Activated B cell treated with CpG ODN at 0.5 μM for 24 hours (primary cell): ENCODE measurements at regions of chr19 and their contacts with region 1.

Region 1: GRCh38 chr19:34134190-34135053 is 37.9 kb upstream of the LSM14A start:
- DNase-seq: peak; percentile 96
- ATAC-seq: peak; percentile 99
- H3K4me3 Mint-ChIP-seq: peak overlapping the region; percentile 93
- H3K27ac Mint-ChIP-seq: peak overlapping the region; percentile 91
- H3K4me1 Mint-ChIP-seq: peaks cover 5% of the 10 kb centered on the region
- H3K27me3 Mint-ChIP-seq: no peaks in the 10 kb centered on the region
- CTCF ChIP-seq: no peak

Region 2: DNA sequence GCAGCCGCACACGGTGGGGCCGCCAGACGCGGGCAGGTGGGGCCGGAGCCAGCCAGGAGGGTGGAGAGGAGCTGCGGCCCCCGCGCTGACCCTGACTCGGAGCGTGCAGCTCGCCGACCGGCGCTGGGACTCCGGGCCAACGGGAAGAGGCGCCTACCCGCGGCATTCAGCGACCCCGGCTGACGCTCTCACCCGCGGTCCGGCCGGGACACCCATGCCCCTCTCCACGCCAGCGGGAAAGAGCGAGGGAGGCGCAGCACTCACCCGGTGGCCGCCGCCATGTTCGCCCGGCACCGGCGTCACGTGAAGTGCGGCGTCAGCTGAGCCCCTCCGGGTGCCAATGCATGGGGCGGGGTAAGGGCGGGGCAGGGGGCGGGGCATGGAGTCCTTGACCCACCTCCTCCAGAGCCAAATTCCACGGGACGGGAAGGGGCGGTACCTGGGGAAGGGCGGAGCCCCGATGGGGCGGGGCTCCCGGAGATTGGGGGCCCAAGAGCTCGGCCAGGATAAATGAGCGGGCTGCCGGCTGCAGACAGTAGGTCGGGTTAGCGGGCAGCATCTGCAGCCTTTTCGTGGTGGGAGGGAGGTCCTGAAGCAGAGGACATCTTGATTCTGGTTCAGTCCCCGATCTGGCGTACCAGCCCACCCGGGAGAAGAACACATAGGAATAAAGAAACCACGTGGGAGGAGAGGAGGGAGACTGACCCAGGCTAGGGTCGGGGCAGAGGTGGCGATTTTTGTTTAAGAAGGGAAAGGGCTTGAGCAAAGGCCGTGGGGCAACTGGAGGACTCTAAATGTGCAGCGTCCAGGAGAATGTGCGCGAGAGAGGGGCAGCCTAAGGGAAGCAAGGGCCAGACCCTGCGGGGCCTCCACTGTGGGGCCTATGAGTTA is 612.7 kb before region 1 on chr19 and contains the start of gene PEPD:
- CTCF ChIA-PET with region 1: no interaction called
- POLR2A ChIA-PET with region 1: no interaction called
- intact Hi-C with region 1: loop called (anchors 5 kb)
- DNase-seq: peak; percentile 78
- ATAC-seq: peak; percentile 98
- H3K4me3 Mint-ChIP-seq: peak within 1 kb of the TSS; percentile 91
- H3K27ac Mint-ChIP-seq: peak within 1 kb of the TSS; percentile 66
- H3K4me1 Mint-ChIP-seq: peaks cover 19% of the 10 kb centered on the region
- H3K27me3 Mint-ChIP-seq: peaks cover 3% of the 10 kb centered on the region
- CTCF ChIP-seq: no peak
- total RNA-seq, gene PEPD: 49.1 and 49.4 TPM in 2 replicates

Region 3: DNA sequence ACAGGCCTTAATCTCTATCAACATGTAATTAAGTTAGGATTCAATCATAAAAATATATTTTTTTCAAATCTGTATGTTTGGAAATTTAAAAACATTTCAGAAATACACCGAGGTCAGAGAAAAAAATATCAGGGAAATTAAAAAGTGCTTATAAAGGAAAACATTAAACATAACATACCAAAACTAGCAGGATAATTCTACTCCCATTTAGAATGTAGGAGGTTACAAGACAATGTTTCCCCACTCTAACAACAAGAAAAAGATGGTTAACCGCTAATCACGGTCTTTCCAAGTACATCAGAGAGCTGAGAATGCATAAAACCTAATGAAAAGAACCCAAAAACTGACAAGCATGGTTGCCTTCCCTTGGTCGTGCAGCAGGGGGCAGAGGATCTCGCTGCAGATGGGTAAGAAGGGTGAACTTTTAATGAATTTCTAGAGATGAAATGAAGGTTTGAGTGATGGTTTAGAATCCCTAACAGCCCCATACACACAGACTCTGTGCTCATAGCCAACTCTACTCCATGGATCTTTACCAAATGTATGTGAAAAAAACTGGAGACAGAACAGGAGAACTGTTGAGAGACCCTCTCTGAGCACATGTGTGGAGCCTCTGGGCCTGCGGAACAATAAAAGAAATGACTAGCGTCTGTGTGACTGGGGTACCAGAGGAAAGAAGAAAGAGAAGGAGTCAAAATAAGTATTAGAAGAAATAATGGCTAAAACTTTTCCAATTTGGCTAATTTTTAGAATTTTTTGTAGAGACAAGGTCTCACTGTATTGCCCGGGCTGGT is 13.4 kb before region 1 on chr19:
- CTCF ChIA-PET with region 1: interaction called, 3 read pairs
- POLR2A ChIA-PET with region 1: no interaction called
- intact Hi-C with region 1: loop called (anchors 1 kb)
- DNase-seq: no peak
- ATAC-seq: peak; percentile 56
- H3K4me3 Mint-ChIP-seq: no peak overlapping the region
- H3K27ac Mint-ChIP-seq: no peak overlapping the region
- H3K4me1 Mint-ChIP-seq: no peaks in the 10 kb centered on the region
- H3K27me3 Mint-ChIP-seq: peaks cover 12% of the 10 kb centered on the region
- CTCF ChIP-seq: no peak

Region 4: GRCh38 chr19:34145741-34146202 is 11.3 kb after region 1 on chr19:
- CTCF ChIA-PET with region 1: no interaction called
- POLR2A ChIA-PET with region 1: interaction called, 7 read pairs
- intact Hi-C with region 1: loop called (anchors 1 kb)
- DNase-seq: no peak
- ATAC-seq: peak; percentile 65
- H3K4me3 Mint-ChIP-seq: no peak overlapping the region
- H3K27ac Mint-ChIP-seq: no peak overlapping the region
- H3K4me1 Mint-ChIP-seq: peaks cover 1% of the 10 kb centered on the region
- H3K27me3 Mint-ChIP-seq: peaks cover 3% of the 10 kb centered on the region
- CTCF ChIP-seq: peak; percentile 82